Psoas muscle (tissue), 8 donors: ENCODE measurements at regions of chr4 and their contacts with region 1.

Region 1: DNA sequence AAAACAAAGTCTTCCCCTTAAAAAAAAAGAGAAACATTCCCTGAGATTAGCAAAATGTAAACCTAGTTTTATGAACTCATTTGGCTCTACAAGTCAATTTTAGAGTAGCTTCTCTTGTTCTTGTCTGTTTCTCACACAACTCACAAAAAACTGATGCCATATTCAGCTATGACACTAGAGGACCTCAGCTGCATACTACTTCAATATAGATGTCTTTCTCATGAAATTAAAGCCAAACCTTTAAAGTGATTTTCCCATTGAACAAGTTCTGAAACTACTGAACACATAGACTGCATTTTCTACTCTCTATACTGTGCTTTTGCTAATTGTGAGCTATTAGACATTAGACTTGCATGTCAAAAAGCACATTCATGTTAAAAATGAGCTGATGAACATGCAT is 49.8 kb downstream of the TBCK start:
- DNase-seq: no peak
- ATAC-seq: no peak
- H3K4me3 ChIP-seq: no peak overlapping the region
- H3K27ac ChIP-seq: no peak overlapping the region
- H3K4me1 ChIP-seq: peaks cover 3% of the 10 kb centered on the region
- H3K27me3 ChIP-seq: no peaks in the 10 kb centered on the region
- CTCF ChIP-seq: peak; percentile 34

Region 2: DNA sequence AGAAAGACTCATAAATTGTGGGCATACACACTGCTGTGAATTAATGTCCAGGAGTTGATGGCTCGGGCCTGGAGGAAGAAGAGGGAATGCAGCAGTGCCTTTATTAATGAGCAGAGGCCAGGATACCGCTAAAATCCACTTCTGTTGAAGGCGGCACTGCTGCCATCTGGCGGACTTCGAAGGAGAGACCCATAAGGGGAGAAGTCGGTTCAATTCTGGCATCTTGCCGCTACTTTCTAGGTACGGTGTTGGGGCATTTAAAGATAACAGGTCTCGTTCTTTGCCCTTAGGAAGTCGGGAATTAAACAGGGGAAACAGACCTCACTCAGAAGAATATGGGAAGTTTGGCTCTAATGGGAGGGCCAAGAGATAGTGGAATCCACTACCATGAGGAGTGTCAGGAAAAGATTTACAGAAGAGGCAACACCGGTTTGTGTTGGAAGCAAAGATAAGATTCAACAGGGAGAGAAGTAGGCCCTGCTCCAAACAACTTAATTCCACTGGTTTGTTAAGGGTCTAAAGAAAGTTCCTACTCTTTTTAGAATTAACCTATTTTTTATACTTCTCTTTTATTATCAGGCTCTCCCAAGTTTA is 236.0 kb after region 1 on chr4:
- intact Hi-C with region 1: loop called in 1 of 2 experiments (anchors 10 kb)
- DNase-seq: peak; percentile 23 to 55
- ATAC-seq: peak; percentile 28 to 61 (median 50)
- H3K4me3 ChIP-seq: no peak overlapping the region
- H3K27ac ChIP-seq: no peak overlapping the region
- H3K4me1 ChIP-seq: no peaks in the 10 kb centered on the region
- H3K27me3 ChIP-seq: peaks cover 0 to 2% (median 0%) of the 10 kb centered on the region in 3 donors
- CTCF ChIP-seq: peak; percentile 62